ENCODE measurements at regions of chr12 and their contacts with region 1.

Region 1: DNA sequence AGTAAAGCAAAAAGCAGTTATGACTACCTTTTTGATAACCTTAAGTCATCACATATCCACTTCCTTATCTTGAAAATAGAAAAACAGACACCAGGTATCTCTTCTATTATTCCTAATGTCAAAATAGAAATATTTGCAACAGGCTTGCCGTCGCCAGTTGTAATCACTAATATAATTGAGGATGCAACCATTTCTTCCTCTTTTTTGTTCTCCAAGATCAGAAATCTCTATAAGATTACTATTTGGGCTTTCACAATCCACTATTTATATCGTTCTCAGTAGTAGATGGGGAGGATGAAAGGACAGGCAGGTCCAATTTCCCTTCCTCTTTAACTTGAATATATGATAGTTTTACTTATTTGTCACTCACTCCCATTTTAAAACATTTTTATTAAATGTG is 130.2 kb upstream of the HMGA2 start:
- DNase-seq: no peak
- H3K4me3 ChIP-seq: no peak overlapping the region
- CTCF ChIP-seq: no peak

Region 2: DNA sequence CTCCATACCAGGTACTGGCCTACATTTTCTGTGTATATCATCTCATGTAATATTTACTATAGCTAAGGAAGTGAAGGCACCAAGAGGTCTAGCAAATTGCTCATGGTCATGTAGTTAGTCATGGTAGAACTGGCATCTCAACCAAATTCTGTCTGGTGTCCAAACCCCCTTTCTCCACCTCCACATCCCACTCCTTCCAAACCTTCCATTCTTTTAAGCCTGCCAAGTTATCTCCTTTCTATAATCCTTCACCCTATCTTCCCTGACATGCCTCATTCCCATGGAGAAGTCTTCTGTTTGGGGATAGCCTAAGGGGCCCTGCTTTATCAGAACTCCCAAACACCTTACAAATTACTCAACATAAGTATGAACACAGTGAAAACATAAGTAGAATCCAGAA is 66.1 kb before region 1 on chr12:
- in situ Hi-C with region 1: loop called (anchors 5 kb)
- DNase-seq: no peak
- H3K4me3 ChIP-seq: no peak overlapping the region
- CTCF ChIP-seq: no peak

Region 3: DNA sequence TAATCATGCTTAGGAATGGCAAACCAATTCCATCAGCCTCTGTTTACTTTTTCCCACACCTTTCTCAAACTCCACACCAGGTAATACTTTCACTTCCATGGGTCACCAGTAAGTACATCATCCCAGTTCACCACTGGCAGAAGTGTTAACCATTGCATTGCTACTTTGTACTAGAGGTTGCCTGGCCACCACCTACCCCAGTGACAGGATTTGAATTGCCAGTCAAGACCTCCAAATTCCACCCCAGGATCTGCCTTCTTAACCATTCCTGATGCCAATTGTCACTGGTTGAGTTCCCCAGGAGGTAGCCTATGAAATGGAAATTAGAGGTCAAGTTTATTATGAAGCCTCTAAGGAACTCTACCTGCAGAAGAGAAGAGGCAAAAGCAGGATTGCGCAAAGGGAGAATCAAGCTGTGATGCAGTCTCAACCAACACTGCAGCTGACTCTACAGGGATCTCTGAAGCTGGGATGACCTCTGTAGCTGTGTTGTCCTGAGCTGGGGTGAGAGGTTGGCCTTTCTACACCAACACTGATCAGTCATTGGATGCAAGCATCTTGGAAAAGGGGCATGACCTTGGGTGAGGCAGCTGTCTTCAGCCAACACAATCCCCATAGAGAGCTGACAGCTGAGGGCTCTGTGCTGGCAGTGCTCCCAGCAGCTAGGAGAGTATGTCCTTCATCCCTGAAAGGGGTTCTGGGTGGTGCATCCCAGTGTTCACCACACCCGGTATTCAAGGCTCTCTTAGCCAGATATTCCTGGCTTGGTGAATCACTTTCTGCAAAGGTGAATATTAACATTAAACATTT is 93.1 kb after region 1 on chr12:
- in situ Hi-C with region 1: no loop called
- DNase-seq: no peak
- H3K4me3 ChIP-seq: no peak overlapping the region
- CTCF ChIP-seq: no peak

Region 4: DNA sequence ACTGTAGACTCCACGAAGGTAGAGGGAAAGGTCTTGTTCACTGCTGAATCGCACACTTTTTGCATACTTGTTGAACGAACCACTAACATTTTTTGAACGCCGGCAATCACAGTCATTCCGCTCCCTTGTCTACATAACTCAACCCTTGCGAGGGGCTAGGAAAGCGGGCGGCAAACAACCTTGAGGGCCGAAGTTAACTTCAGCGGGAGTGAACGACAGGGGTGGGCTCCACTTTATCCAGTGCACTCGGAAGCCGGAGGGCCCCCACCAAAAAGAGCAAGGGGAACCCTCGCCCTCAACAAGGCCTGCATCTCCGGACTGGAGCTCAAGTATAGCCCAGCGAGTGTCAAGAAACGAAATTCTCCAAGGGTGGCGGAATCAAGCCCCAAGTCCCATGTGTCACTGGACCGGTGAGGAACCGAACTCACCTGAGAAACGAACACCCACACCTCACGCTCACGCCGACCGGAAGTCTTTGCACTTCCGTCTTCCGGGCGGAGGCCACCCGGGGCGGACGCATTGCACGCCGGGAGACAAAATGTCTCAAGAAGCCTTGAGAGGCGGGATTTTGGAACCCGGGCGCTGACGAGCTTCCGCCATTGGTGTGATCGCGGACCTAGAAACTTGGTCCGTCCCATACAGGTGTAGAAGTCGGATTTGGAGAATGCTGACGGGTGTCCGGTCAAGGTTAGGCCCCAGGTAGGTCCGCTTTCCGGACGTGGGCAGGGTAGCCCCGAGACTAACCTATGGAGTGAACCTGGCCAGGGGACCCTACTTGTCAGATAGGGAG is 436.3 kb after region 1 on chr12 and contains the start of gene LLPH:
- in situ Hi-C with region 1: no loop called
- DNase-seq: peak; percentile 58
- H3K4me3 ChIP-seq: peak within 1 kb of the TSS; percentile 100
- CTCF ChIP-seq: no peak

Measured in astrocyte of the cerebellum (primary cell).